Calu3 (cell line): ENCODE measurements at regions of chr4 and their contacts with region 1.

Region 1: DNA sequence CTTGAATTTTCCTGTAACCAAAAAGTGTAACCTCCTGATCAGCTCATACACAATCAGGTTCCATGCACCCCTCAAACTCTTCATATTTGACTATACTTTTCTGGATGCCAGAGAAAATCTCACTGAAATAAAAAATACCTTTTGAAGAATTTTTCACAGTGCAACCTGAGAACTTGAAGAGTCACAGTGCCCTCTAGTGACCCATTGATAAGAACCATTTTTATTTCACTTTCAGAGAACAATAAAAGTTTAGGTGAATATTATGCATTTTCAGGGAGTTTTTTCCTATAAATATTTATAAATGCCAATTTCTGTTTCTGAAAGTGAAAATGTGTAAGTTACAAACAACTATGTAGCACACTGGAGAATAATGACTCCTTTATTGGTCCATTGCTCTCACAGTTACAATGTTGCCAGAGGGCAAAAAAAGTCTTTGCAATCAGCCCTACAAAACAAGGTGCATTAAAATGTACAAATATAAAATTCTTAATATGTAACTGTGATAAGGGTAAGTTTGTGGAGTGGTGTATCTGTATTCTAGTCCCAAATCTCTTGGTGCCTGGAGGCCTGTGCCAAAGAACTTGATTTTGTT is 153.6 kb upstream of the INTU start:
- DNase-seq: no peak
- H3K4me3 Mint-ChIP-seq: no peak overlapping the region
- H3K27ac Mint-ChIP-seq: no peak overlapping the region
- H3K4me1 Mint-ChIP-seq: no peaks in the 10 kb centered on the region
- H3K27me3 Mint-ChIP-seq: no peaks in the 10 kb centered on the region
- CTCF ChIP-seq: no peak

Region 2: GRCh38 chr4:126395664-126396063 is 1083.5 kb before region 1 on chr4:
- CTCF ChIA-PET with region 1: no interaction called
- intact Hi-C with region 1: loop called (anchors 5 kb)
- DNase-seq: no peak
- H3K4me3 Mint-ChIP-seq: no peak overlapping the region
- H3K27ac Mint-ChIP-seq: no peak overlapping the region
- H3K4me1 Mint-ChIP-seq: no peaks in the 10 kb centered on the region
- H3K27me3 Mint-ChIP-seq: no peaks in the 10 kb centered on the region
- CTCF ChIP-seq: no peak

Region 3: DNA sequence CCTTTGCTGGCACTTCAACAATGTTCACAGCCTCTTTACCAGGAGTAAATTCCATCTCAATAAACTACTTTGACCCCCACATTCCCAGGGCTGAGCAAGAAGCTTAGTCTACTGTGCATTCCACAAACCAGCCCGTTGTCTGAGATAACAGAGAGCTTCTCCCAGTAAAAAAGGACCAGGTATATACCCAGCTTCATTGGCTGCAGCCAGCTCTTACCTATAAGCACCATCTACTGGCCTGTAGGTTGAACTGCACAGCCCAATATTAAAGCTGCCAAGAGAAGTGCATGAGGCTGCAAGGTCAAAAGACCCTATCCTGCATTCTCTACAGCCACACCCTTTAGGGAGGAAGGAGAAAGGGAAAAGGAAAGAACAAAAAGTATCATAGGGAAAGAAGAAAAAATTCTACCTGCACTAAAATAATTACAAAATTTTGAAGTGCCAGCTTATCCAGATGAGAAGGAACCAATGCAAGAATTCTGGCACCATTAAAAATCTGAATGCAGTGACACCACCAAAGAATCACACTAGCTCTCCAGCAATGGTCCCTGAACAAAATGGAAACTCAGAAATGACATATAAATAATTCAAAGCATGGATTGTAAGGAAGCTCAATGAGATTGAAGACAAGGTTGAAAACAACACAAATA is 107.9 kb after region 1 on chr4:
- CTCF ChIA-PET with region 1: no interaction called
- intact Hi-C with region 1: loop called (anchors 5 kb)
- DNase-seq: peak; percentile 14
- H3K4me3 Mint-ChIP-seq: no peak overlapping the region
- H3K27ac Mint-ChIP-seq: no peak overlapping the region
- H3K4me1 Mint-ChIP-seq: no peaks in the 10 kb centered on the region
- H3K27me3 Mint-ChIP-seq: no peaks in the 10 kb centered on the region
- CTCF ChIP-seq: peak; percentile 50

Region 4: DNA sequence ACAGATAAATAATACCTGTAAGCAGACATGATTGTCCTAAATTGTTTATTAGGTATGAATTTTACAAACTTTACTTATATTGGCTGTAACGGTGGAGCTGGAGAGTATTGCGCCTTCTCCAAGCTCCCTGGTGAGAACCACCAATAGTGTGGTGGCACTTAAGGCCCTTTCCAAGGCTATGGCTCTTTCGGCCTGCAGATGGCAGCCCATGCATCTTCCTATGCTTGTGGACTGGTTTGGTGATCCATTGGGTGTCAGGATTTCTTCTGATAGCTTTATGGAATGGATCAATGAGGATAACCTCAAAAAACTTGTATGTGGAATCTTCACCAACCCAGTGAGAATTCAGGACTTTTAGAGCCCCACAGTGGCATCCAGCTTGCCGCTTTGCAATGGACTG is 589.8 kb after region 1 on chr4:
- CTCF ChIA-PET with region 1: no interaction called
- intact Hi-C with region 1: no loop called
- DNase-seq: no peak
- H3K4me3 Mint-ChIP-seq: no peak overlapping the region
- H3K27ac Mint-ChIP-seq: no peak overlapping the region
- H3K4me1 Mint-ChIP-seq: no peaks in the 10 kb centered on the region
- H3K27me3 Mint-ChIP-seq: no peaks in the 10 kb centered on the region
- CTCF ChIP-seq: no peak